Uterus (tissue), 4 donors: ENCODE measurements at regions of chr3 and their contacts with region 1.

Region 1: GRCh38 chr3:11060500-11061251 is 68.1 kb downstream of the SLC6A1 start:
- DNase-seq: peak; percentile 43 to 67
- H3K4me3 ChIP-seq: peak overlapping the region in 1 of 2 donors; percentile 8
- H3K27ac ChIP-seq: no peak overlapping the region
- H3K4me1 ChIP-seq: no peaks in the 10 kb centered on the region
- H3K27me3 ChIP-seq: no peaks in the 10 kb centered on the region
- CTCF ChIP-seq: peak; percentile 82 to 88 (median 86)
- POLR2A ChIP-seq: no peak

Region 2: GRCh38 chr3:10945683-10946287 is 114.9 kb before region 1 on chr3:
- intact Hi-C with region 1: loop called (anchors 10 kb)
- DNase-seq: peak; percentile 29 to 52
- H3K4me3 ChIP-seq: no peak overlapping the region
- H3K27ac ChIP-seq: no peak overlapping the region
- H3K4me1 ChIP-seq: no peaks in the 10 kb centered on the region
- H3K27me3 ChIP-seq: no peaks in the 10 kb centered on the region
- CTCF ChIP-seq: peak; percentile 72 to 82 (median 74)
- POLR2A ChIP-seq: no peak

Region 3: GRCh38 chr3:11145888-11146287 is 85.2 kb after region 1 on chr3:
- intact Hi-C with region 1: no loop called
- DNase-seq: no peak
- H3K4me3 ChIP-seq: no peak overlapping the region
- H3K27ac ChIP-seq: no peak overlapping the region
- H3K4me1 ChIP-seq: no peaks in the 10 kb centered on the region
- H3K27me3 ChIP-seq: no peaks in the 10 kb centered on the region
- CTCF ChIP-seq: no peak
- POLR2A ChIP-seq: no peak

Region 4: GRCh38 chr3:11159421-11159904 is 98.8 kb after region 1 on chr3:
- intact Hi-C with region 1: no loop called
- DNase-seq: peak; percentile 61 to 69
- H3K4me3 ChIP-seq: no peak overlapping the region
- H3K27ac ChIP-seq: peak overlapping the region; percentile 58 to 60
- H3K4me1 ChIP-seq: no peaks in the 10 kb centered on the region
- H3K27me3 ChIP-seq: no peaks in the 10 kb centered on the region
- CTCF ChIP-seq: no peak
- POLR2A ChIP-seq: no peak